Posterior vena cava (tissue), 2 donors: ENCODE measurements at regions of chr1 and their contacts with region 1.

Region 1: DNA sequence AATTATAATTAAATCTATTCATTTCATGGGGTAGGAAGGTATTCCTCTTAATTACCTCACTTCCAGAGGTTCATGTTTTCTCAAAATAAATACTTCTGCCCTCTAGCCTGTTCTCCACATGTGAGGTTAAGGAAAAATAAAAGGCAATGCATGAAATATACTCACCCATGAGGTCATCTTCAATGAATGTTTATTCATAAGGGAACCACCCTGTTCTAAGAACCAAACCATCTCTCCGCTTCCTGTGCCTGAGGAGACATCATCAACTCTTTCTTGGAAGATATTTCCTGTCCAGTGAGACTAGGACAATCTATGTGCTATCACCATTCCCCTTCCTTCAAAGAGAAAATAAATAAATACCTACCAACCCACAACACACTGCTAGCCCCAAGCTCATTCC is 513.7 kb upstream of the PLXNA2 start:
- DNase-seq: no peak

Region 2: GRCh38 chr1:209926045-209926444 is 1168.2 kb after region 1 on chr1:
- intact Hi-C with region 1: loop called in 1 of 2 experiments (anchors 5 kb)
- DNase-seq: no peak